OCI-LY7 (cell line): ENCODE measurements at regions of chr2 and their contacts with region 1.

Region 1: GRCh38 chr2:112645310-112646101 is at the start of gene SLC20A1:
- DNase-seq: peak; percentile 95
- H3K4me3 ChIP-seq: peak within 1 kb of the TSS; percentile 80
- H3K27ac ChIP-seq: peak within 1 kb of the TSS; percentile 75
- H3K4me1 ChIP-seq: peaks cover 40% of the 10 kb centered on the region
- CTCF ChIP-seq: peak; percentile 60
- total RNA-seq, gene SLC20A1: 59.7 and 64.8 TPM in 2 replicates

Region 2: DNA sequence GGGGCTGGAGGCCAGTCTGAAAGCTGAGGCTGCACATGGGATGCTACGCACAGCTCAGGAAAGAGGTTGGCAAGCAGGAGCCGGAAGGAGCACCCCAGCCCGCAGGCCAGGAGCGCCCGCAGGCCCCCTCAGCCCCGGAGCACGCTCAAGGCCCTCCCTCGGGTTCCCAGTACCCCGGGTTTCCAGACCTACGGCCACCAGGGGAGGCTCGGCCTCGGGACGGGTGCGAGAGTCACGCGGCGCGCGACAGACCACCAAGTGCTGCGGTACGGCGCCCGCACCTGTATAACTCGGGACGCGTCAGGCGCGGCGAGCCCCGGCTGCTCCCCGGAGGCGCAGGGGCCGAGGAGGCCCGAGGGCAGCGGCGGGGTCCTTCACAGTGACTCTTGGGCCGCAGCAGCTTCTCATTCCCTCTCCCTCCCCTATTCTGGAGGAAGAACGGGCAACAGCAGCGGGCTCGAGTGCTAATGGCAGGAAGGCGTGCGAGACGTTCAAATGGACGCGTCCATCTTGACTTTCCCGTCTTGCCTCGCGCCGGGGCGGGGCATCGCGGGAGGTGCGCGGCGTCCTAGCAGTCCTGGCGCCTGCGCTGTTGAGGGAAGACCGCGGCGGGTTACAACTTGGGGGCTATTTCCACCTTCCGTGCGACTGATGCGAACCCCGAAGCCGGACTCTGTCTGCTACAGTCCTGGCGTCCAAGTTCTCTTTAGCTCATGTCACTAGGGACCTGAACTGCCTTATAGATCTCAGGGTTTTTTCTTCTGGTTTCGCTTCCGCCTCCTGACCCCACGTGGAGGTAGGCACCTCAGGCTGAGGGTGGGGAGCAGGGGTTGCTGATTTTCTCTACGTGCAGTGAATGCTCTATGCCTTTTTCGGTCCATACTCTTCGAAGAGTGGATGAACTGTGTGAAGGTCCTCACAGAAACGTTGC is 761.6 kb before region 1 on chr2 and contains the start of gene ANAPC1:
- CTCF ChIA-PET with region 1: no interaction called
- POLR2A ChIA-PET with region 1: interaction called, 3 read pairs
- intact Hi-C with region 1: loop called (anchors 10 kb)
- DNase-seq: peak; percentile 92
- H3K4me3 ChIP-seq: peak within 1 kb of the TSS; percentile 88
- H3K27ac ChIP-seq: peak within 1 kb of the TSS; percentile 87
- H3K4me1 ChIP-seq: peaks cover 14% of the 10 kb centered on the region
- CTCF ChIP-seq: no peak
- total RNA-seq, gene ANAPC1: 103 and 151 TPM in 2 replicates

Region 3: DNA sequence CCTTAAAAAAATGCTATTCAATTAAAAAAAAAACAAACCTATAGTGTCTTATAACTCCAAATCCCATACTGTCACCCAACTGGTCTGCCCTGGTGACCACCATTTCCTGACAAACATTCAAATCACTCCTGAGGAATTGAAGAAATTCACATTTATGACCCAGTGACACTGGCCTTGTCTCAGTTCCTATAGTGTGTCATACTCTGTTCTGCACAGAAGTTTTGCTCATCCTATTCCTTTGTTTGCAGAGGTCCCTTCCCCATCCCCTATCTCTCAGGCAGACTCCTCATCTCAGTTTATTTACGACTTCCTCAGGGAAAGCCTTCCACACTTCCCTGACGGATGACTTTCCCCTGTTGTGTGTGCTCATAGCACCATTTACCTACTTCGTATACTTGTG is 355.4 kb before region 1 on chr2:
- CTCF ChIA-PET with region 1: no interaction called
- POLR2A ChIA-PET with region 1: no interaction called
- intact Hi-C with region 1: no loop called
- DNase-seq: no peak
- H3K4me3 ChIP-seq: no peak overlapping the region
- H3K27ac ChIP-seq: no peak overlapping the region
- H3K4me1 ChIP-seq: no peaks in the 10 kb centered on the region
- CTCF ChIP-seq: no peak

Region 4: DNA sequence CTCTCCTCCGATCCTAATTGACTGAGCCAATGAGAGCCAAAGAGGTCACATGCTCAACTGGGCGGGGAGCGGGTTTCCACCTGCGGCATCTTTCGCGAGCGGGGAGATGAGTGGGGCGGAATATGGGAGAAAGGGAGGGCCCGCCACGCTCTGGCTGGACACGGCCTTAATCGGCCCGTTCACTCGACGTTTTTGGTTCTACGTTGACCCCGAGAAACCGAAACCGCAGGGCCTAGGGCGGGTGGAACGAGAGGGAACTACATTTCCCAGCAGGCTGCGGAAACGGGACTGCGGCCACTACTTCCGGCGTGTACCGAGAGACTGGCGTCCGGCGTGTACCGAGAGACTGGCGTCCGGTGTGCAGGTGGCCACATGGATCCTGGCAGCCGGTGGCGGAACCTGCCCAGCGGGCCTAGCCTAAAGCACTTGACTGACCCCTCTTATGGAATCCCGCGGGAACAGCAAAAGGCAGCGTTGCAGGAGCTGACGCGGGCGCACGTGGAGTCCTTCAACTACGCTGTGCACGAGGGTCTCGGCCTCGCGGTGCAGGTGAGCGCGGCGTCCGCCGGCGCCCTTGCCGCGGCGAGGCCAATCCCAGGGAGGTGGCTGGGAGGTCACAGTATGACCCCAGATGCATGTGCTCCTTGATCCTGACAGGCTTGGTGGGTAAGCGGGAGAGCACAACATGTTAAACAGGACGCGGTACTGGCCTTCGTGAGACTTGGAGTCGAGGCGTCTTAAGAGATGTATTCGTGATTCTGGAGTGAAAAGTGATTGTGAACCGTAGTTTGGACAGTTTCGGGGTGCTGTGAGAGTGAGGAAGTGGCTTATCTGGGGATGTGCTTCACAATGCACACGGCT is 103.2 kb before region 1 on chr2 and contains the start of gene POLR1B:
- CTCF ChIA-PET with region 1: no interaction called
- POLR2A ChIA-PET with region 1: no interaction called
- intact Hi-C with region 1: loop called (anchors 5 kb)
- DNase-seq: peak; percentile 85
- H3K4me3 ChIP-seq: peak within 1 kb of the TSS; percentile 91
- H3K27ac ChIP-seq: peak within 1 kb of the TSS; percentile 83
- H3K4me1 ChIP-seq: peaks cover 23% of the 10 kb centered on the region
- CTCF ChIP-seq: no peak
- total RNA-seq, gene POLR1B: 28.0 and 30.5 TPM in 2 replicates

Region 5: DNA sequence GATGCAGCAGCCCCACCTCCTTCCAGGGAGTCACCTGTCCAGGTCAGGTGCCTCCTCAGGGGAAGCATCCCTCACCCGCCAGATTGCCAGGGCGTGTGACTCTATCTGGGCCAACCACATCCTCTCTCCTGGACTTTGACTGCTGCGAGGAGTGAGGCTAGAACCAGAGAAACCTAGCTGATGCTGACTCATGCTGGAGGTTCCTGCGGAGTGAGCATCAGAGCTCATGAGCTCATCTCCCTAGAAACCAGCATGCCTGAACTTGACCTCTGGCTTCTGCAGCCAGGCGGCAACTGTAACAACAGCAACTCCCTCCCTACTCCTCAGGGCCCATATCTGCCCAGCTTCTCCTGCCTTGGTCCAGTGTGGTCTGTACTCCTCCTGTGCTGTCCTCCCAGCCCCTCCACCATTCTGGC is 47.0 kb after region 1 on chr2:
- CTCF ChIA-PET with region 1: interaction called, 3 read pairs
- POLR2A ChIA-PET with region 1: interaction called, 5 read pairs
- intact Hi-C with region 1: loop called (anchors 2 kb)
- DNase-seq: peak; percentile 22
- H3K4me3 ChIP-seq: no peak overlapping the region
- H3K27ac ChIP-seq: no peak overlapping the region
- H3K4me1 ChIP-seq: peaks cover 4% of the 10 kb centered on the region
- CTCF ChIP-seq: no peak

Region 6: DNA sequence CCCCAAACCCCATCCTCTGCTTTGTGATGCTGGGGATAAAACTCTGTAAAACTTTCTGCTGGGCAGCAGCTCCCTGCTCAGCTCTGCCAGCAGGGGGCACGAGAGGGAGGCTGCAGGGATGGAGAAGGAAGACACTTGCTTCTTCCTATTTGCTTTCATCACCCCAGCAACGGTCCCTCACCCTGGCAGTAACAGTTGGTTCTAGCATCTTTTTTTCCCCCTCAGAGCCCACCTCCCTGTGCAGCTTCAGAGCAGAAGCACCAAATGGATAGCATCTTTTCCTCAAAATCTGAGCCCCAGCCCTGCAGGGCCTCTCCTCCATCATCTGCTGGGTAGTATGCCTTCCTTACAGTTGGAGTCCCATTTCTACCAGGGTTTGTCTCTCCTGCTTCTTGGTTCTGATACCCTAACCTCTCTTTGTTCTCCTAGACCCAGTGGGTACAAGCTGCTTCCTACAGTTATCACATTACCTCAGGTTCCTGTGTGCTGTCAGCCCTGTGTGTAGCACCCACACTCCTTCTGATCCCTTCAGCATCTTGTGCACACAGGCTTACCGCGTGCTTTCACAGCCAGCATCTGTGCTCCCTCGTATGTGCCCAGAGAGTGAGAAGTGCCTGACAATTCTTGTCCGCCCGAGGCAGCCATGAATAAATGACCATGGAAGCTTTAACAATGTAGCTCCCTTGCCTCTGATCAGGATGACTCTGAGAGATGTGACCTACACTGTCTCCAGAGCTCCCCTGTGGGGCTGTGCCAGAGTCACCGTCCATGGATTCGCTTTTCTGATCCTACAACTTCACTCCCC is 104.5 kb after region 1 on chr2:
- CTCF ChIA-PET with region 1: no interaction called
- POLR2A ChIA-PET with region 1: no interaction called
- intact Hi-C with region 1: no loop called
- DNase-seq: peak; percentile 70
- H3K4me3 ChIP-seq: no peak overlapping the region
- H3K27ac ChIP-seq: no peak overlapping the region
- H3K4me1 ChIP-seq: peaks cover 7% of the 10 kb centered on the region
- CTCF ChIP-seq: peak; percentile 96

Region 7: DNA sequence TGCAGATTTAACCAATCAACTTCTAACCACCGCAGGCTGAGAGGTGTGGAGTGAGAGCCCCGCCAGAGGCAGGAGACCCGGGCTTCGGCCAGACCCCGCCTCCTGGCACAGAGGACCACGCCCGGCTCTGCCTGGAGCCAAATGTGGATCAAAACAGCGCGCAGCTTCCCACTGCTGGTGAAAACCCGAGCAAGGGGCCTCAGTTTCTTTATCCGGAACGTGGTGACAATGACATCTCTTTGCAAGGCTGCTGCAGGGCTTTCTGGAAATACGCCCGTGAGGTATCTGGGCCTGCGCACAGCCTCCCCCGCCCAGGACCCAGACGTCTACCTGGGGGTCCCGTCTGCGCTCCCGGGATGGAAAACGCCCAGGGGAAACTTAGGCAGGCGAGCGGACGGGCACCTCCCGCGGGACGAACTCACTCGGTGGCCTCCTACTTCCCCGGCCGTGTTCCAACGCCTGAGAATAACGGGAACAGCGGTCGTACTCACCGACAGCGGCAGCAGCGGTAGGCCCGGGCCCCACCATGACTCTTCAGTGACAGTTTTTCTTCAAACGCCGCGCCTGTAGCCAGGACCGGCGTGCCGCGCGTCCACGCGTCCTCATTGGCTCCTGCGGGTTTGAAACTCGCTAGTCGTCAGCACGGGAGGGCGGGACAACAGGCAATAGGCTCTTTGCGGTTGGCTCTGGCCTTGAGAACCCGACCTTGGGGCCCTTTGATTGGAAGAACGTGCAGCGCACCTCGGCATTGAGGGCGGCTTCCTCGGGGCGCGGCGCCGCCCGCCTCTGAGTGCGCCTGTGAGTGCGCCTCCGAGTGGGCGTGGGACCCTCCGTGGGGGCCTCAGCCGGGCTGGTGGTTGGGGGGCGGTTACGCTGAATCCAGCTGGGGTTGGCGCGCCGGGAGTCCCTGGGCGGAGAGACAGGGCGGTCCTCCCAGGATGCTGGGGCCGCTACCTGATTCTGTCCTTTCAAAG is 118.9 kb after region 1 on chr2 and contains the start of gene CKAP2L:
- CTCF ChIA-PET with region 1: no interaction called
- POLR2A ChIA-PET with region 1: interaction called, 4 read pairs
- intact Hi-C with region 1: loop called (anchors 5 kb)
- DNase-seq: peak; percentile 99
- H3K4me3 ChIP-seq: peak within 1 kb of the TSS; percentile 82
- H3K27ac ChIP-seq: peak within 1 kb of the TSS; percentile 75
- H3K4me1 ChIP-seq: peaks cover 25% of the 10 kb centered on the region
- CTCF ChIP-seq: no peak; the same call in 1 of the 2 replicates
- total RNA-seq, gene CKAP2L: 28.8 and 31.8 TPM in 2 replicates